ENCODE measurements at regions of chr17 and their contacts with region 1.

Region 1: DNA sequence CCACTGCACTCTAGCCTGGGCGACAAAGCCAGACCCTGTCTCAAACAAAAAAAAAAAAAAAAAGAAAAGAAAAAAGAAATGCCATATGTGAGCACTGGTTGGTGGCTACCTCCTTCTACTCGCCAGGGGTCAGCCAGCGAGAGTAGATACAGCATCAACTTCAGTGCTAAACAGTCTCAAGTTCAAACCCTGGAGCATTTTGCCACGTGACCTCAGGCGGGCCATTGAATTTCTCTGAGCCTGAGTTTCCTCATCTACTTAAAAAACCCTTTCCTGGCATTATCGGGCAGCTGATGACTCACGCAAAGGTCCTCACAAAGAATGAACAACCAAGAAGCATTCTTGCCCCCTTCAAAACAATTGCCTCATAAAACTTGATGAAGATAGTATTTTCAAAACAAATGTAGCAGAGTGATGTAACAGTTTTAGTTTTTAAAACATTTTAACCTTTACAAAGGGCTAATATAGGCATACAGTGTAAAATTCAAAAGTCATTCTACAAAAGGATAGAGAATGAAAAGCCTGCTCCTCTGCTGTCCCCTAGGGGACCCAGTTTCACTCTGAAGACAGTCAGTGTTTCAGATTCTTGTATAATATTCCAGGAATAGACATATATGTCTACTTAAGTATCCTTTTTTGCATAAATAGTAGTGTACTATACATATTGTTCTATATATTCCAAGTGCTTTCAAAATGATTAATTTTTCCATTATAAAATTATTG is 28.4 kb downstream of the DNAH2 start:
- DNase-seq: no peak
- ATAC-seq: no peak
- H3K4me3 ChIP-seq: no peak overlapping the region
- H3K4me3 Mint-ChIP-seq: no peak overlapping the region
- H3K27ac ChIP-seq: no peak overlapping the region
- H3K27ac Mint-ChIP-seq: no peak overlapping the region
- H3K4me1 ChIP-seq: no peaks in the 10 kb centered on the region
- H3K4me1 Mint-ChIP-seq: peaks cover 0 to 2% (median 0%) of the 10 kb centered on the region in 7 donors
- H3K27me3 ChIP-seq: no peaks in the 10 kb centered on the region
- H3K27me3 Mint-ChIP-seq: peaks cover 2 to 18% (median 10%) of the 10 kb centered on the region in 5 donors

Region 2: DNA sequence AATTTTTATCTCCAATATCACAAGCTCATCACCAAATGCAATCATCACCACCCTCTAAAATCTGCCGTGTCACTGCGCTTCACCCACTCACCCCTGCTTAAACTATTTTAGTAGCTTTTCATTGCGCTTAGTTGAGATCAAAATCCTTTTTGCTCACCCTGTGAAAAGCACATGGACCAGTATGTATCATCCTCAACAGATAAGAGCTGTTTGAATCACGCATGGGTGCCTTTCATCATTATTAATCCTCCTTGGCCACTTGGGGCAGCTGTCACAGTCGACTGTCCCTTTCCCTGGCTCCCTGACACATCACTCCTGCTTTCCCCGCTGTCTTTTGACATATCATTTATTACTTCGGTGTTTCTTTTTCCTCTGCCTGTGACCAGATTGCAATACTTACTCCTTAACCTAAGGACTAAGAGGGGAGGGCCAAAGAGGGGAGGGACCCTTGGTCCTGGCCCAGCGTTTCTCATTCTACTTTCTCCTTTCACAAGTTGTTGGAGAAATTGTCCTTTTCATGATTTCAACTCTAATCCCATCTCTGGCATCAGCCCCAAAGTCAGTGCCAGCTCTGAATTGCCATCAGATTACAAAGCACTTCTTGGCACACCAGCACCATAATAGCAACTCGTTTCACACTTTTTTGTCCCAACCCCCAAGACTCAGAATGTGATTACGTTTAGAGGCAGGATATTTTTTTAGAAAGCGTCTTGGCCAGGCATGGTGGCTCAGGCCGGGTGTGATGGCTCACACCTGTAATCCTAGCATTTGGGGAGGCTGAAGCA is 79.5 kb after region 1 on chr17:
- CTCF ChIA-PET with region 1: no interaction called
- POLR2A ChIA-PET with region 1: no interaction called
- intact Hi-C with region 1: loop called in 1 of 2 experiments (anchors 10 kb)
- DNase-seq: no peak
- ATAC-seq: peak; percentile 47
- H3K4me3 ChIP-seq: no peak overlapping the region
- H3K4me3 Mint-ChIP-seq: no peak overlapping the region
- H3K27ac ChIP-seq: no peak overlapping the region
- H3K27ac Mint-ChIP-seq: peak overlapping the region in 1 of 9 donors; percentile 23
- H3K4me1 ChIP-seq: no peaks in the 10 kb centered on the region
- H3K4me1 Mint-ChIP-seq: peaks cover 0 to 5% (median 0%) of the 10 kb centered on the region in 7 donors
- H3K27me3 ChIP-seq: no peaks in the 10 kb centered on the region
- H3K27me3 Mint-ChIP-seq: peaks cover 0 to 32% (median 0%) of the 10 kb centered on the region in 5 donors

Region 3: GRCh38 chr17:7887482-7888183 is 141.7 kb after region 1 on chr17:
- CTCF ChIA-PET with region 1: no interaction called
- POLR2A ChIA-PET with region 1: no interaction called
- intact Hi-C with region 1: no loop called
- DNase-seq: peak; percentile 41 to 96 (median 93)
- ATAC-seq: peak; percentile 83
- H3K4me3 ChIP-seq: peak overlapping the region; percentile 61
- H3K4me3 Mint-ChIP-seq: no peak overlapping the region
- H3K27ac ChIP-seq: peak overlapping the region; percentile 91
- H3K27ac Mint-ChIP-seq: no peak overlapping the region
- H3K4me1 ChIP-seq: peaks cover 28 to 29% of the 10 kb centered on the region in 2 donors
- H3K4me1 Mint-ChIP-seq: peaks cover 0 to 17% (median 8%) of the 10 kb centered on the region in 7 donors
- H3K27me3 ChIP-seq: no peaks in the 10 kb centered on the region
- H3K27me3 Mint-ChIP-seq: no peaks in the 10 kb centered on the region

Region 4: DNA sequence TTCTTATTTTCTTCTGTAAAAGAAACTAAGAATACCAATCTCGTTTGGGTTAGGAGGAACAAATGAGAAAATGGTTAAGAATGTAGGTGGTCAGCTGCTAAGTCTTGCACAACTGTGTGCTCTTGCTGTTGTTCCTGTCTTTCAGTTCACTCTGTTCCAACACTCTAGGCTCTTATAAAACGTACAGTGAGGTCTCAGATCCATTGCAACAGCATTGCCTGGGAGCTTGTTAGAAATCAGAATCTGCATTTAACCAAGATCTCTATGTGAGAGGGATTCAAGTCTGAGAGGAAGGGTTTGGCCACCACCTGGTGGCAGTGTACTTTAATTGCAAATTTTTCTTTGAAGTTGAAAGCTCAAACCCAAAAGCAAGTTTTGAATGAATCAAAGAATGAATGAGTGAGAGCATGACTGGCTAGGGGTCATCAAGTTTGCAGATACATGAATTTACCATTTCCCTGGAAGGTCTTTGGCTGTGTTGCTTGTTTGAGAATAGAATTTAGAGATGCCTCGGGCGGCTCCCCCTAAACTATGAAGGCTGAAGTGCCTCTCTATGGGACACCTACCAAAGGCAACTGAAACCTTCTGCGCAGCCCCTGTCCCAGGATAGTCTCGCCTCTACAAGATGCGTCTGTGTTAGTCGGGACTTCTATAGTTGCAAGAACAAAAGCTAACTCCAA is 295.5 kb after region 1 on chr17:
- CTCF ChIA-PET with region 1: interaction called, 9 read pairs
- POLR2A ChIA-PET with region 1: no interaction called
- intact Hi-C with region 1: loop called in 1 of 2 experiments (anchors 1 kb)
- DNase-seq: peak in 7 of 9 donors; percentile 18 to 56 (median 47)
- ATAC-seq: peak; percentile 69
- H3K4me3 ChIP-seq: no peak overlapping the region
- H3K4me3 Mint-ChIP-seq: no peak overlapping the region
- H3K27ac ChIP-seq: no peak overlapping the region
- H3K27ac Mint-ChIP-seq: no peak overlapping the region
- H3K4me1 ChIP-seq: no peaks in the 10 kb centered on the region
- H3K4me1 Mint-ChIP-seq: peaks cover 0 to 16% (median 0%) of the 10 kb centered on the region in 7 donors
- H3K27me3 ChIP-seq: peaks cover 0 to 13% of the 10 kb centered on the region in 2 donors
- H3K27me3 Mint-ChIP-seq: peaks cover 18 to 30% (median 23%) of the 10 kb centered on the region in 5 donors

Measured in naive thymus-derived CD4-positive, alpha-beta T cell (primary cell).